Activated CD4-positive, alpha-beta memory T cell treated with anti-CD3 and anti-CD28 coated beads, Interleukin-2, amount 10 ng/mL, durations not matched to agents 7 days and 5 days (primary cell): ENCODE measurements at regions of chr12 and their contacts with region 1.

Region 1: DNA sequence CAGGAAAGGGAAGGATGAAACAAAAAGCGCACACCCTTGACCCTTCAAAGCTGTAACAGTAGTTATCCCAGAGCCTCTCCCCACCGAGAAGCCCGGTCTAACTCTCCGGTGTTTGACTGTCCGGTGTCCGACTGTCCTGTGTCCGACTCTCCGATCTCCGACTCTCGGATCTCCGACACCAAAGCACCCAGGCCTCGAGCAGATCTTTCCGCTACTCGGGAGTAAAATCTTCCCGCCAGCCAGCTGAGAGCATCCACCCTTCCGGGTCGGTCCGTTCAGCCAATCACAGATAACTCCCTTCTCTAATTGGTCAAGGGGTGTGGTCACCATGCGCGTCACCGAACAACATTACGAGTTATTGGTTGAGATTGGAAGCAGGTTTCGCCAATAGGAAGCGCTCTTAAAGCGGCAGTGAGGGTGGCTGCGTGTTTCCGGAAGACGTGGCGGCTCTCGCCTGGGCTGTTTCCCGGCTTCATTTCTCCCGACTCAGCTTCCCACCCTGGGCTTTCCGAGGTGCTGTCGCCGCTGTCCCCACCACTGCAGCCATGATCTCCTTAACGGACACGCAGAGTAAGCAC is at the starts of genes GOLT1B and RECQL:
- DNase-seq: peak; percentile 93
- H3K4me3 Mint-ChIP-seq: no peak within 1 kb of the TSS
- H3K27ac Mint-ChIP-seq: no peak within 1 kb of the TSS
- H3K4me1 Mint-ChIP-seq: peaks cover 56% of the 10 kb centered on the region
- H3K27me3 Mint-ChIP-seq: no peaks in the 10 kb centered on the region
- total RNA-seq, gene GOLT1B: 44.1 to 57.5 TPM
- total RNA-seq, gene RECQL: 87.6 to 100 TPM

Region 2: GRCh38 chr12:21428241-21428640 is 73.2 kb before region 1 on chr12:
- CTCF ChIA-PET with region 1: no interaction called
- POLR2A ChIA-PET with region 1: no interaction called
- DNase-seq: no peak
- H3K4me3 Mint-ChIP-seq: no peak overlapping the region
- H3K27ac Mint-ChIP-seq: no peak overlapping the region
- H3K4me1 Mint-ChIP-seq: no peaks in the 10 kb centered on the region
- H3K27me3 Mint-ChIP-seq: peaks cover 7% of the 10 kb centered on the region

Region 3: DNA sequence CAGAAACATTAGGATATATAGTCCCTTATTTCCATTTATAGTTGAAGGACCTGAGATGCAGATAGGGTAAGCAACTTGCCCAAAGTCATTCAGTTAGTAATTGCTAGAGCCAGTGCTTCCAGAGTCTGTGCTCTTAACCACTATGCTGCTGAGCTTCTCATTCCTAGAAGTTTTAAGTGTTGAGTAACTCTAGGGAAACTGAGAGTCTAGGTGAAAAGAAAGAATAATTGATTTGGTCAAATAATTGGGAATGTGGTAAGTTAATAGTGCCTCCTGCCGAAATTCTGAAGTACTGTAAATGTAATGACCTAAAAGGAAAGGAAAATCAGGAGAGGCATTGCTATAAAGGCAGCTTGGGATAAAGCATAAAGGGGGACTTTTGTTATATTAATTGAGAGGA is 49.9 kb before region 1 on chr12:
- CTCF ChIA-PET with region 1: interaction called, 3 read pairs
- POLR2A ChIA-PET with region 1: interaction called, 57 read pairs
- DNase-seq: no peak
- H3K4me3 Mint-ChIP-seq: no peak overlapping the region
- H3K27ac Mint-ChIP-seq: no peak overlapping the region
- H3K4me1 Mint-ChIP-seq: peaks cover 36% of the 10 kb centered on the region
- H3K27me3 Mint-ChIP-seq: no peaks in the 10 kb centered on the region

Region 4: DNA sequence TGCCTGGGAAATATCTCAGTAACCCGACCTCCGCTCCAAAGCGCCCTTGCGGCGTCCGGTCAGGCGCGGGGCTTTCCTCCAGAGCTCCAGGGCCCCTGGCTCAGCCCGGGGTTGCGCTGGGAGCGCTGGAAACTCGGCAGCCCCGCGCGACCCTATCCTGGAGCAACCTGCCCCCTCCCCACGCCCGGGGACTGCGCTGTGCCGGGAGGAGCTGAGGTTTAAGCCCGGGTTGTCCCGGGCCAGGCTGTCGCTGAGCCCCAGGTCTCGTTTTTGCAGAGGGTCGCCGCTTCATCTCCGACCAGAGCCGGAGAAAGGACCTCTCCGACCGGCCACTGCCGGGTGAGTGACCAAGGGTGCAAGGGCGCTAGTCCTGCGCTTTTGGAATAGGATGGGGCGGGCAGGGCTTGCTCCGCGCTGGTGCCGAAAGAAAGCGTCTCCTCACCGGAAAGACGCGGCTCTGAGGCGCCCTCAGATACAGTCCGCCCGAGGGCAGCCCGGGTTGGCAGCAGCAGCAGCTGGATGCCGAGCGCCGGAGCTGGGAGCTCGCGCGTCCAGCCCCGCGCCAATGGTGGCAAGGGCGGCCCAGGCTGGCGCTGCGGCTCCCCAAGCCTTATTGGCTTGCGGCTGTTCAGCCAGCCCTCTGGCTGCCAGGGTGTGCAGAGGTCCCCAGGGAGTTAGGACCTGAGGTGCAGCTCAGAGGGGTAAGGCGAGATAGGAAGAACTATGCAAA is 26.1 kb after region 1 on chr12:
- CTCF ChIA-PET with region 1: no interaction called
- POLR2A ChIA-PET with region 1: interaction called, 26 read pairs
- DNase-seq: peak; percentile 72
- H3K4me3 Mint-ChIP-seq: peak overlapping the region; percentile 70
- H3K27ac Mint-ChIP-seq: no peak overlapping the region
- H3K4me1 Mint-ChIP-seq: peaks cover 10% of the 10 kb centered on the region
- H3K27me3 Mint-ChIP-seq: peaks cover 21% of the 10 kb centered on the region

Region 5: GRCh38 chr12:21657326-21658077 is 156.0 kb after region 1 on chr12 and contains the start of gene LDHB:
- CTCF ChIA-PET with region 1: interaction called, 7 read pairs
- POLR2A ChIA-PET with region 1: interaction called, 65 read pairs
- DNase-seq: peak; percentile 95
- H3K4me3 Mint-ChIP-seq: peak within 1 kb of the TSS; percentile 82
- H3K27ac Mint-ChIP-seq: peak within 1 kb of the TSS; percentile 97
- H3K4me1 Mint-ChIP-seq: peaks cover 42% of the 10 kb centered on the region
- H3K27me3 Mint-ChIP-seq: no peaks in the 10 kb centered on the region
- total RNA-seq, gene LDHB: 955 to 985 TPM